ENCODE measurements at regions of chr1 and their contacts with region 1.

Region 1: GRCh38 chr1:12619792-12620487 is 1.9 kb upstream of the DHRS3 start:
- DNase-seq: peak; percentile 88
- ATAC-seq: peak; percentile 35
- H3K4me3 Mint-ChIP-seq: peak overlapping the region; percentile 98
- H3K27ac Mint-ChIP-seq: no peak overlapping the region
- H3K4me1 Mint-ChIP-seq: peaks cover 53% of the 10 kb centered on the region
- H3K27me3 Mint-ChIP-seq: no peaks in the 10 kb centered on the region
- CTCF ChIP-seq: peak; percentile 93

Region 2: DNA sequence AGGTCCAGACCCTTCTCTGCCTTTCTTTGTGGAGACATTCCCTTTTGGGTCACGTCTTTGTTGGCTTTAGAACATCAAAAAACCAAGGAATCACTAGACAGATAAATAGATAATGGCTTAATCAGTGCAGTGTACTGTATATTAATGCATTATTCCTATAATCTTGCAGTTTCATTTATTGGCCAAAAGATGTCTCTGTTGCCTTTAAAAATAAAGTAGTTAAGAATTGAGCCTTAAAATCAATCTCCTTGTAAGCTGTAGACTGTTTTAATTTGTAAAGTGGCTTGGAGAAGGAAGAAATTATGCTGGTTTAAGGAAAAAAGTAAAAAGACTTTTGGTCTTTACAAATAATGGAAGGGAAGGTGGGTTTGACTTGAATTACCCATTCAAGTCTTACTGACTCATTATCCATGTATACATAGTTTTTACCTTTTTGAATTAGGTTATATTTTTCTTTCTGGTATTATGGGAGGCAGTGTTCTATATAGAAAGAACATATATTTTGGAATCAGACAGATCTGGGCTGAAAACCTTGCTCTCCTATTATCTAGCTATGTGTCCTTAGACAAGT is 305.5 kb before region 1 on chr1:
- CTCF ChIA-PET with region 1: interaction called, 4 read pairs
- POLR2A ChIA-PET with region 1: interaction called, 10 read pairs
- DNase-seq: no peak
- ATAC-seq: no peak
- H3K4me3 Mint-ChIP-seq: no peak overlapping the region
- H3K27ac Mint-ChIP-seq: no peak overlapping the region
- H3K4me1 Mint-ChIP-seq: peaks cover 7% of the 10 kb centered on the region
- H3K27me3 Mint-ChIP-seq: no peaks in the 10 kb centered on the region
- CTCF ChIP-seq: no peak

Region 3: GRCh38 chr1:12596007-12596821 is 23.7 kb before region 1 on chr1:
- CTCF ChIA-PET with region 1: interaction called, 107 read pairs
- POLR2A ChIA-PET with region 1: interaction called, 60 read pairs
- DNase-seq: peak; percentile 40
- ATAC-seq: peak; percentile 64
- H3K4me3 Mint-ChIP-seq: peak overlapping the region; percentile 61
- H3K27ac Mint-ChIP-seq: no peak overlapping the region
- H3K4me1 Mint-ChIP-seq: peaks cover 62% of the 10 kb centered on the region
- H3K27me3 Mint-ChIP-seq: peaks cover 5% of the 10 kb centered on the region; the same call in 1 of the 2 replicates
- CTCF ChIP-seq: no peak

Region 4: GRCh38 chr1:12630946-12631530 is 11.1 kb after region 1 on chr1:
- CTCF ChIA-PET with region 1: interaction called, 36 read pairs
- POLR2A ChIA-PET with region 1: interaction called, 5 read pairs
- DNase-seq: no peak
- ATAC-seq: no peak
- H3K4me3 Mint-ChIP-seq: no peak overlapping the region
- H3K27ac Mint-ChIP-seq: no peak overlapping the region
- H3K4me1 Mint-ChIP-seq: peaks cover 68% of the 10 kb centered on the region
- H3K27me3 Mint-ChIP-seq: no peaks in the 10 kb centered on the region
- CTCF ChIP-seq: no peak

Region 5: DNA sequence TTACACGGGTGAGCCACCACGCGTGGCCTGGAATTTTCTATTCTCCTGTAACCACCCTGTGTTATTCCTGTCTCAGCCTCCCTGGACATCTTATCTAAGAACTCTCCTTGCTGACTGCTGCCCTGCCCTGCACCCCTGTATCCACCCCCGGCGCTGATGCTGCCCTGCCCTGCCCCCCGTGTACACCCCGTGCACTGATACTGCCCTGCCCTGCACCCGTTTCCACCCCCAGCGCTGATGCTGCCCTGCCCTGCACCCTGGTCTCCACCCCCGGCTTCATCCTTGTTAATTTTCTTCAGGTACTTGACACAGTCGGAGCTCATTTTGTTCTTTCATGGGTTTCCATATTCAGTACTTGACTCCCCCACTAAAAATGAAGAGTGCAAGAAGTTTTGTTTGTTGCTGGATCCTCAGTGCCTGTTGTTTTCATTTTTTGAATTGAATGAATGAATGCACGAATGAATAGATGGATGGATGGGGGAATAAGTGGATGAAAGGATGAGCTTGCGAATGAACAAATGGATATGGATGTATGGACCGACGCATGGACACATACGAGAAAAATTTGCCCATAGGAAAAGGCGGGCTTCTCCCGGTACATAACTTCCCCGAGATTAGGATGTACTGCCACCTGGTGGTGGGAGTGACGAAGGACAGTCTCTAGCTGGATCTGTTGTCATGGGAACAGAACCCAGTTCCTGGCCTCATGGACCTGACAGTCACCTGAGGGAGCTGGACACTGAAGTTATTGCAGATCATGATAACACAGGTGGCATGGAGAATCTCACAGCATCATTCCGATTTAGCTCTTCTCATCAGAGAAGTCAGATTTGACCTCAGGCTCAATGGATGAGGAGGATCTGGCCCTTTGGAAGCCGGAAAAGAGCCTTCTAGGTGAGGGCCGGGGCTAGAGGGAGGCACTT is 38.9 kb after region 1 on chr1:
- CTCF ChIA-PET with region 1: interaction called, 40 read pairs
- POLR2A ChIA-PET with region 1: no interaction called
- DNase-seq: peak; percentile 85
- ATAC-seq: peak; percentile 92
- H3K4me3 Mint-ChIP-seq: no peak overlapping the region
- H3K27ac Mint-ChIP-seq: no peak overlapping the region
- H3K4me1 Mint-ChIP-seq: peaks cover 15% of the 10 kb centered on the region
- H3K27me3 Mint-ChIP-seq: peaks cover 16% of the 10 kb centered on the region
- CTCF ChIP-seq: peak; percentile 86